ENCODE measurements at regions of chr18 and their contacts with region 1.

Region 1: GRCh38 chr18:2293109-2293839 is 278.0 kb downstream of the METTL4 start:
- DNase-seq: no peak
- ATAC-seq: no peak
- H3K4me3 ChIP-seq: no peak overlapping the region
- H3K27ac ChIP-seq: no peak overlapping the region
- H3K4me1 ChIP-seq: no peaks in the 10 kb centered on the region
- H3K27me3 ChIP-seq: no peaks in the 10 kb centered on the region
- CTCF ChIP-seq: no peak
- EP300 ChIP-seq: no peak
- POLR2A ChIP-seq: no peak
- RAD21 ChIP-seq: no peak

Region 2: DNA sequence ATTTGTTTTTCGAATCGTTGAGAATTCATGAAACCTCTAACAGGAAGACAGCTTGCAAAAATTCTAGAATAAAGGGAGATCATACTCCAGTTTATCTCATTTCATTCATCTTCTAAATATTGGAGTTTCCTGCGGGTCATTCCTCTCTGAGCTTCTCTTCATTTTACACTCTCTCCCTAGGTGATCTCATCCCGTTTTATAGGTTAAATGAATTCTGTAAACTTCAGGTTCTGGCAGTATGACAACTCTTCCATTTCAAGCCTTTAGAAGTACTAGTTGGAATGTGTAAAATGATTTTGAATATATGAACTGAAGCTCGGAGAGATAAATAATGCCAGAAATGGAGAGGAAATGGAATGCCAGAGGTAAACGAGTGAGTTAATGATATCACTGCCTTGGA is 34.3 kb before region 1 on chr18:
- CTCF ChIA-PET with region 1: no interaction called
- POLR2A ChIA-PET with region 1: no interaction called
- RAD21 ChIA-PET with region 1: no interaction called
- SMC1A ChIA-PET with region 1: no interaction called
- in situ Hi-C with region 1: no loop called
- intact Hi-C with region 1: no loop called
- DNase-seq: no peak
- ATAC-seq: no peak
- H3K4me3 ChIP-seq: no peak overlapping the region
- H3K27ac ChIP-seq: no peak overlapping the region
- H3K4me1 ChIP-seq: no peaks in the 10 kb centered on the region
- H3K27me3 ChIP-seq: no peaks in the 10 kb centered on the region
- CTCF ChIP-seq: no peak
- EP300 ChIP-seq: no peak
- POLR2A ChIP-seq: no peak
- RAD21 ChIP-seq: no peak

Region 3: DNA sequence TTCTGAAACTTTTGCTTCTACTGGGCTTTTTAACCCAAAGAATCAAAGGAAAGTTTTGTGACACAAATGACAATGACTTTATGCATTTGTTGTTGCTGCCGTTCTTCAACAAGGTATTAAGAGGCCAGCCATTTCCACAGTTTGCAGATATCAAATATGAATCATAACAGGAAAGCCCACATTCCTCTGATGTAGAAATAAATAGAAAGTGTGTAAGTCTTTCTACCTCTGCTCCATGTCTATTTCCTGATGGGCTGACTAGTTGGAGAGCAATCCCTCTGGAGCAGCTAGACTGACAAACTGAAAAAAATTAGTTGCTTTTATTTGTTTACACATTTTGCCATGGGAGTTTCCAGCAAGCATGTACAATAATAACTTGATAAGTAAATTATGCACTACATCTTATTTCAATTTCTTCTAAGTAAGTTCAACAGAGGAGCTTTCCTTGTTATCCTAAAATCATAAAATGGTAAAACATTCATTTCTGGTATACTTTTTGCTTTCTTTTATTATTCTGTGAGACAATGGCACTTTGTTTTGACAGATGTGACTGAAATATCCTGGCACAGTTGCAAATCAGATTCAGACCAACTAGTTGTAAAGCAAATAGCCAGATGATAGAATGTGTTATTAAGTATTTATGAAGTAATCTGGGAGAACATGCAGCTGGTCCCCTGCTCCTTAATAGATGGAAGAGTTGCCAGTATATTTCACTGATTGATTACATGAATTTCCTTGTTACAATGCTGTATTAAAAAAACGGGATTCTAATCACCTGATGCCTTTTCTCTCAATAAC is 11.3 kb after region 1 on chr18:
- CTCF ChIA-PET with region 1: interaction called, 10 read pairs
- POLR2A ChIA-PET with region 1: no interaction called
- RAD21 ChIA-PET with region 1: no interaction called
- SMC1A ChIA-PET with region 1: interaction called, 3 read pairs
- in situ Hi-C with region 1: no loop called
- intact Hi-C with region 1: no loop called
- DNase-seq: no peak
- ATAC-seq: no peak
- H3K4me3 ChIP-seq: no peak overlapping the region
- H3K27ac ChIP-seq: no peak overlapping the region
- H3K4me1 ChIP-seq: no peaks in the 10 kb centered on the region
- H3K27me3 ChIP-seq: no peaks in the 10 kb centered on the region
- CTCF ChIP-seq: no peak
- EP300 ChIP-seq: no peak
- POLR2A ChIP-seq: no peak
- RAD21 ChIP-seq: no peak

Region 4: GRCh38 chr18:2641638-2642037 is 348.4 kb after region 1 on chr18:
- CTCF ChIA-PET with region 1: no interaction called
- POLR2A ChIA-PET with region 1: no interaction called
- RAD21 ChIA-PET with region 1: no interaction called
- SMC1A ChIA-PET with region 1: no interaction called
- in situ Hi-C with region 1: no loop called
- intact Hi-C with region 1: no loop called
- DNase-seq: peak; percentile 77
- ATAC-seq: peak; percentile 80
- H3K4me3 ChIP-seq: peak overlapping the region; percentile 33
- H3K27ac ChIP-seq: peak overlapping the region; percentile 99
- H3K4me1 ChIP-seq: peaks cover 49% of the 10 kb centered on the region
- H3K27me3 ChIP-seq: no peaks in the 10 kb centered on the region
- CTCF ChIP-seq: no peak
- EP300 ChIP-seq: peak in 1 of 2 experiments; percentile 57; a peak in 1 of 4 replicates
- POLR2A ChIP-seq: no peak
- RAD21 ChIP-seq: no peak